GM12878 (cell line): ENCODE measurements at regions of chr2 and their contacts with region 1.

Region 1: GRCh38 chr2:20225294-20226151 is 593 bp upstream of the SDC1 start:
- DNase-seq: no peak
- ATAC-seq: peak; percentile 81
- H3K4me3 ChIP-seq: peak overlapping the region; percentile 73; the same call in 1 of the 2 replicates
- H3K27ac ChIP-seq: no peak overlapping the region
- H3K4me1 ChIP-seq: peaks cover 29% of the 10 kb centered on the region
- H3K27me3 ChIP-seq: no peaks in the 10 kb centered on the region; a peak in 1 of 4 replicates
- CTCF ChIP-seq: peak; percentile 61 to 90 (median 84)
- EP300 ChIP-seq: no peak
- POLR2A ChIP-seq: no peak; the same call in 1 of the 2 replicates
- RAD21 ChIP-seq: peak; percentile 87

Region 2: DNA sequence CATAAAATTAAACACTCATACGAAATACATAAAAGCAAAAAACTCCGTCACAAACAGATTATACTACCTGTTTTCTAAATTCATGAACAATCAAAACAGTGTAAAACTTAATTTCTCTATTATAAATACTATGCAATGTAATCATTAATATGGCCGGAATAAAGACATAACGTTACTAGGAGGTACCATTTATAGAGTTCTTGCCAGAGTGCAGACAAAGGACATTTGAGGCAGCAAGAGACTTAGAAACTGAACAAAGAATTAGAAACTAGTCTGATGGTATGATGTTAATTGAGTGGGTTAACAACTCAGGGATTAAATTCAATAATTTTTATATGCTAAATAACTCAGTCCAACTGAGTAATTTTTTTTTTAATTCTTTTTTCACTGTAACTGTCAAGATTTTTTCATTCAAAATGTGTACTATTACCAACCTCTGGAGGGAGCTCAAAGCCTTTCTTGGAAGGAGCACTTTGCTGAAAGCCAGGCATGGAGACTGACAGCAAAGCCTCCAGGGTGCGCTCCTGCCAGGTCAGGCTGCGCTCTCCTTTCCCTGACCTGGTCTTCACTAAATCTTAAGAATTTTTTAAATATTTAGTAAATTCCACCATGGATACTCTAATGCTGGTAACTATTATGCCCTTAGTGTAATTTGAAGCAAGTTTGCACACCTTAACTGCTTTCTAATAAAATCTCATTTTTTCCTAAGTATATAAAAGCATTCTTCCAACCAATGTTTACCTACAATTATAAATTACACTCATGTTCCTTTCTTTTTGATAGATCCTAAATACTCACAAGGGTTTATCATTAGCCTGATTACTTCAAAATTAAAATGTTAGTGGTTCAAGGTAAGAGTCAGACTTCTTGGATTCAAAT is 269.7 kb before region 1 on chr2:
- CTCF ChIA-PET with region 1: interaction called, 14 read pairs
- POLR2A ChIA-PET with region 1: no interaction called
- RAD21 ChIA-PET with region 1: interaction called, 7 read pairs
- SMC1A ChIA-PET with region 1: interaction called, 5 read pairs
- in situ Hi-C with region 1: no loop called
- intact Hi-C with region 1: no loop called
- DNase-seq: peak; percentile 24
- ATAC-seq: peak; percentile 100
- H3K4me3 ChIP-seq: no peak overlapping the region
- H3K27ac ChIP-seq: no peak overlapping the region
- H3K4me1 ChIP-seq: no peaks in the 10 kb centered on the region
- H3K27me3 ChIP-seq: no peaks in the 10 kb centered on the region
- CTCF ChIP-seq: peak; percentile 79 to 98 (median 82)
- EP300 ChIP-seq: no peak
- POLR2A ChIP-seq: no peak
- RAD21 ChIP-seq: peak; percentile 91

Region 3: GRCh38 chr2:20135631-20136050 is 89.9 kb before region 1 on chr2:
- CTCF ChIA-PET with region 1: interaction called, 284 read pairs
- POLR2A ChIA-PET with region 1: interaction called, 5 read pairs
- RAD21 ChIA-PET with region 1: interaction called, 156 read pairs
- SMC1A ChIA-PET with region 1: interaction called, 191 read pairs
- in situ Hi-C with region 1: no loop called
- intact Hi-C with region 1: loop called (anchors 1 kb)
- DNase-seq: no peak
- ATAC-seq: peak; percentile 98
- H3K4me3 ChIP-seq: no peak overlapping the region
- H3K27ac ChIP-seq: no peak overlapping the region
- H3K4me1 ChIP-seq: peaks cover 2% of the 10 kb centered on the region; the same call in 1 of the 2 replicates
- H3K27me3 ChIP-seq: peaks cover 0 to 3% of the 10 kb centered on the region in 2 experiments; a peak in 2 of 4 replicates
- CTCF ChIP-seq: peak; percentile 87 to 94 (median 88)
- EP300 ChIP-seq: no peak
- POLR2A ChIP-seq: no peak
- RAD21 ChIP-seq: peak; percentile 93

Region 4: DNA sequence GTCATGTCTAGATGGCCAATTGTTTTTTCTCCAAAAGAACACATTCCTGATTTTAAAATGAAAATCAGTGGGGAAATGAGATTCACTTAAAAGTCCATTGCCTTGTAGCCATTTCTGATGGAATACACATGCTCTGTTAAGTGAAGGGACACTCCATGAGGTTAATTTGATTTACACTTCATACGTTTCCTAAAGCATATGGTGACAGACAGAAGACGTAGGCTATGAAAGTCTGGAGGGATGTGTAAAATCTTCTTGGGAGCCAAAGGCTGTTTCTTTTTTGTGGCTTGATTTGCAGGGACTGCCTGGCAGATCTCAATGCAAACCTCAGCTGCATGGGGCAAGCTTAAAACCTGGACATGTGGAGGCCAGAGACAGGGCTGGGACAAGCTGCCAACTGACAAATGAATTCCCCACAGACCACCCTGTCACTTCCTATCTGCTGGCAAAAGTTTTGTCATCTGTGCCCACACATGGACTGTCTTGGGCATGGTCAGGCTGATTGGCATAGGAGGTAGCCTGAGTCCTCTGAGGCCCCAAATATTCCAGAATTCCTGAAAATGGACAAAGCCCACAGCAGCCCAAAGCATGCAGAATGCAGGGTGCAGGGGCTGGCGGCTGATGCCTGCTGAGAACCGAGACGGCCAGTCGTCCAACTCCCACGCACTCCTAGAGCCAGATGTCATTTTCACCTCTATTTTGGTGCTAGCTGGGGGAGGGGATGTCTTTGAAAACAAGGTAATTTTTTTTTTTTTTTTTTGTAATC is 74.5 kb before region 1 on chr2:
- CTCF ChIA-PET with region 1: interaction called, 284 read pairs
- POLR2A ChIA-PET with region 1: interaction called, 9 read pairs
- RAD21 ChIA-PET with region 1: interaction called, 67 read pairs
- SMC1A ChIA-PET with region 1: interaction called, 191 read pairs
- in situ Hi-C with region 1: no loop called
- intact Hi-C with region 1: no loop called
- DNase-seq: peak; percentile 48
- ATAC-seq: peak; percentile 80
- H3K4me3 ChIP-seq: no peak overlapping the region
- H3K27ac ChIP-seq: peak overlapping the region; percentile 59
- H3K4me1 ChIP-seq: peaks cover 54% of the 10 kb centered on the region
- H3K27me3 ChIP-seq: no peaks in the 10 kb centered on the region
- CTCF ChIP-seq: no peak
- EP300 ChIP-seq: 0 out of 4 replicates have a peak, but pooled peaks of 1 of the 2 experiments have one; percentile 47
- POLR2A ChIP-seq: no peak
- RAD21 ChIP-seq: peak; percentile 26; the same call in 1 of the 2 replicates

Region 5: GRCh38 chr2:20207051-20207450 is 18.5 kb before region 1 on chr2:
- CTCF ChIA-PET with region 1: interaction called, 39 read pairs
- POLR2A ChIA-PET with region 1: interaction called, 38 read pairs
- RAD21 ChIA-PET with region 1: interaction called, 69 read pairs
- SMC1A ChIA-PET with region 1: interaction called, 15 read pairs
- in situ Hi-C with region 1: no loop called
- intact Hi-C with region 1: no loop called
- DNase-seq: peak; percentile 53
- ATAC-seq: peak; percentile 56
- H3K4me3 ChIP-seq: no peak overlapping the region
- H3K27ac ChIP-seq: peak overlapping the region; percentile 58
- H3K4me1 ChIP-seq: peaks cover 42% of the 10 kb centered on the region
- H3K27me3 ChIP-seq: no peaks in the 10 kb centered on the region
- CTCF ChIP-seq: no peak
- EP300 ChIP-seq: no peak
- POLR2A ChIP-seq: peak; percentile 25; the same call in 1 of the 2 replicates
- RAD21 ChIP-seq: no peak

Region 6: GRCh38 chr2:20326163-20326780 is 100.7 kb after region 1 on chr2:
- CTCF ChIA-PET with region 1: interaction called, 12 read pairs
- POLR2A ChIA-PET with region 1: no interaction called
- RAD21 ChIA-PET with region 1: interaction called, 7 read pairs
- SMC1A ChIA-PET with region 1: no interaction called
- in situ Hi-C with region 1: no loop called
- intact Hi-C with region 1: no loop called
- DNase-seq: no peak
- ATAC-seq: peak; percentile 94
- H3K4me3 ChIP-seq: no peak overlapping the region
- H3K27ac ChIP-seq: no peak overlapping the region
- H3K4me1 ChIP-seq: peaks cover 6% of the 10 kb centered on the region; the same call in 1 of the 2 replicates
- H3K27me3 ChIP-seq: no peaks in the 10 kb centered on the region
- CTCF ChIP-seq: peak; percentile 77 to 84 (median 82)
- EP300 ChIP-seq: no peak
- POLR2A ChIP-seq: no peak
- RAD21 ChIP-seq: peak; percentile 64